Right cardiac atrium (tissue), 5 donors: ENCODE measurements at regions of chr9 and their contacts with region 1.

Region 1: GRCh38 chr9:2125906-2126305 is 110.8 kb downstream of the SMARCA2 start:
- DNase-seq: no peak
- ATAC-seq: peak; percentile 53 to 66
- H3K4me3 ChIP-seq: peak overlapping the region; percentile 32
- H3K27ac ChIP-seq: no peak overlapping the region
- H3K4me1 ChIP-seq: peaks cover 7% of the 10 kb centered on the region
- H3K27me3 ChIP-seq: no peaks in the 10 kb centered on the region

Region 2: DNA sequence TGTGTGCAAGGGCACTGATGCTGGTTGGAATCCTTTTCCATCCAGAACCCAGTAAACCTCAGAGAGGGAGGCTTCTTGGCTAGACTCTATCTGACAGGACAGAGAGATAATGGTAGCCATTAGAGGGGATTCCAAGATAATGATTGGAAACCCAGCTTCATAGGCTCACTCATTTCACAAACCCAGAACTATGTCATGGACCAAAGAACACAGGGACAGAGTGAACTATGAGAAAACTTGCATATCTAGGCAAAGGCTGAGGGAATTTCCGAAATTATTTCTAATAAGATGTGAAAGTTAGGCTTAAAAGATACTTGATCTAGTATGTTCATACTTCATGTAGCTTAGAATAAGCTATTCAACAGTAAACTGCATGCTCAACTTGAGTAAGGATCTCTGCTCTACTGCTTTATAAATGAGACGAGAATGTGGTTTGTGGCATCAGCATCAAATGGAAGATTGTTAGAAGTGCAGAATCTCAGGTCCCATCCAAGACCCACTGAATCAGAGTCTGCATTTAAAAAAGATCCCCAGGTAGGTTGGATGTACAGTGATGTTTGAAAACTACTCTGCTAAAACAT is 814.4 kb before region 1 on chr9:
- intact Hi-C with region 1: no loop called
- DNase-seq: no peak
- ATAC-seq: no peak
- H3K4me3 ChIP-seq: no peak overlapping the region
- H3K27ac ChIP-seq: no peak overlapping the region
- H3K4me1 ChIP-seq: no peaks in the 10 kb centered on the region
- H3K27me3 ChIP-seq: no peaks in the 10 kb centered on the region

Region 3: DNA sequence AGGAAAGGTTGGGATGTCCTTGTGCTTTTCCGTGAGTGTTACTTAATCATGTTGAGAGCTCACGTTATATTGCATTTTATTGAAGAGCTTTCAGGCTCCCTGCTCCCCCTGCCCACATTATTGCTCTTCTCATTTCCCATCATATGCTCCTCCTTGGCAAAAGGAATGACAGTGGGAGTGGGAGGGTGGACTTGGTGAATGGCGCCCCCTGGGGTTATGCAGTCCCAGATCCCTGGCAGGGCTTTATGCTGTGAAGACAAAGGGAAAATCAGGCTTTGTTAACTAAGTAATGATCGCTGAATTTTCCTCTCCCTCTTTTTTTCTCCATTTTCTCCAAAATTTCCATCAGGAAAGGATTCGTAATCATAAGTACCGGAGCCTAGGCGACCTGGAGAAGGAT is 55.9 kb after region 1 on chr9:
- intact Hi-C with region 1: loop called in 2 of 4 experiments (anchors 5 to 10 kb)
- DNase-seq: peak in 1 of 3 donors; percentile 28
- ATAC-seq: peak in 1 of 2 donors; percentile 63
- H3K4me3 ChIP-seq: no peak overlapping the region
- H3K27ac ChIP-seq: no peak overlapping the region
- H3K4me1 ChIP-seq: no peaks in the 10 kb centered on the region
- H3K27me3 ChIP-seq: no peaks in the 10 kb centered on the region

Region 4: GRCh38 chr9:2727966-2728613 is 602.2 kb after region 1 on chr9:
- intact Hi-C with region 1: loop called in 1 of 4 experiments (anchors 10 kb)
- DNase-seq: no peak
- ATAC-seq: peak; percentile 66 to 81
- H3K4me3 ChIP-seq: no peak overlapping the region
- H3K27ac ChIP-seq: no peak overlapping the region
- H3K4me1 ChIP-seq: no peaks in the 10 kb centered on the region
- H3K27me3 ChIP-seq: no peaks in the 10 kb centered on the region